ENCODE measurements at regions of chr11 and their contacts with region 1.

Region 1: GRCh38 chr11:107741044-107741823 is 29.4 kb upstream of the SLN start:
- DNase-seq: peak; percentile 65
- H3K4me3 Mint-ChIP-seq: no peak overlapping the region
- H3K27ac Mint-ChIP-seq: no peak overlapping the region
- H3K4me1 Mint-ChIP-seq: no peaks in the 10 kb centered on the region
- H3K27me3 Mint-ChIP-seq: peaks cover 19% of the 10 kb centered on the region

Region 2: DNA sequence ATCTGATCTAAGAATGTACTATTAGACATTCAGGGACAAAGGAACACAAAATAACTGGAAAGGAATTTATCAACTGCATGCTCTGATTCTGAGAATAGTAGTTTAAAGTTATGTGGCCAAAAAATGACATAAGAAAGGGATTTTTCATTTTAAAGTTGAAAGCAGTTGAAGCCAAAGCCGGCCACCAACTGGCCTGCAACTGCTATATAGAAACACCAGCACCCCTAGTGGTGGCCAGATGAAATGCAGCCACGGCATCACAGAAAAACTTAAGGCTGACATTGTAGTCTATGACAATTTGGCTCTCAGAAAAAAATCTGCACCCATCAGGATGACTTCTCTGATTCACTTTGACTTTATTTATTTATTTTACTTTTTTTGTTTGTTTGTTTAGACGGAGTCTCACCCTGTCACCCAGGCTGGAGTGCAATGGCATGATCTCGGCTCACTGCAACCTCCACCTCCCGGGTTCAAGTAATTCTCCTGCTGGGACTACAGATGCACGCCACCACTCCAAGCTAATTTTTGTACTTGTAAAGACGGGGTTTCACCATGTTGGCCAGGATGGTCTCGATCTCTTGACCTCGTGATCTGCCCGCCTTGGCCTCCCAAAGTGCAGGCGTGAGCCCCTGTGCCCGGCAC is 58.1 kb after region 1 on chr11:
- intact Hi-C with region 1: loop called (anchors 1 kb)
- DNase-seq: peak; percentile 88
- H3K4me3 Mint-ChIP-seq: no peak overlapping the region
- H3K27ac Mint-ChIP-seq: no peak overlapping the region
- H3K4me1 Mint-ChIP-seq: peaks cover 2% of the 10 kb centered on the region
- H3K27me3 Mint-ChIP-seq: no peaks in the 10 kb centered on the region

Region 3: DNA sequence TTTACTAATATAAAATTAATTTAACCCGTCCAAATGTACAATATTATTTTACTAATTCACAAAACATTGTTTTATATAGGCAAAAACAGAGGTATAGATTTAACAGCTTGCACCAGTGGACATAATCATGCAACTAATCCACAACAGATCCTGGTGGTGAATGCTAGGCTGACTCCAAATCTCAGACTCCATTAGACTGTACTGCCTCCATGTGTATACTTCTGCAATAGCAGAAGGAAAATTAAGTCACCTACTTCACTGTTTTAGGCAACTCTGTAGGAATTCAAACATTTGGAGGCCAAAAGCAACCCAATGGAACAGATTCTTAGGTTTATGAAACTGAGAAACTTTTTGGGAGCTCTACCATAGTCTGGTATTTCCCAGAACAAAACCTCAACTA is 157.0 kb after region 1 on chr11:
- intact Hi-C with region 1: loop called (anchors 1 kb)
- DNase-seq: no peak
- H3K4me3 Mint-ChIP-seq: no peak overlapping the region
- H3K27ac Mint-ChIP-seq: no peak overlapping the region
- H3K4me1 Mint-ChIP-seq: no peaks in the 10 kb centered on the region
- H3K27me3 Mint-ChIP-seq: peaks cover 7% of the 10 kb centered on the region

Region 4: DNA sequence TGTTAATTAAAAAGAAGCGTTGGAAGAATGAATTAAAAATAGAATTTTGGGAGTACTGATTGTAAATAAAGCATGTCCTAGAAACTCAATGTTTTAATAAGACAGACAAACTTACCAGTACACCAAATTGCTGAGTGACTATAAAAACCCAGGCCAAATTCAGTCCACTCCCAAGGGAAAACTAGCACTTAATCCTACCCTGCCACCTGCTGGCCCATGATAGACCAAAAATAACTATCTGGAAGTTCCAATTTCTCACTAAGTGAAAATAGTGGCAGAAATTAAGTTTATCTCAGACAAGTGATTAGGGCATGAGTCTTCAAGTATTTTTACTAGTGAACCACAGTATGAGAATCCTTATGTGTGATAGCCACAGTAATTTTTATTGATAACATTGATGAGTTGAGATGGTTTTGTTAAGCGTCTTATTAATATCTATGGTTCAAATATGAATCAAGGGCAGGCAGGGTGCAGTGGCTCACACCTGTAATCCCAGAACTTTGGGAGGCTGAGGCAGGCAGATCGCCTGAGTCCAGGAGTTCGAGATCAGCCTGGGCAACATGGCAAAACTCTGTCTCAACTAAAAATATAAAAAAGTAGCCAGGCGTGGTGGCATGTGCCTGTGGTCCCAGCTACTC is 913.9 kb after region 1 on chr11:
- intact Hi-C with region 1: loop called (anchors 10 kb)
- DNase-seq: peak; percentile 82
- H3K4me3 Mint-ChIP-seq: no peak overlapping the region
- H3K27ac Mint-ChIP-seq: no peak overlapping the region
- H3K4me1 Mint-ChIP-seq: no peaks in the 10 kb centered on the region
- H3K27me3 Mint-ChIP-seq: peaks cover 29% of the 10 kb centered on the region